ENCODE measurements at regions of chr3 and their contacts with region 1.

Region 1: GRCh38 chr3:183895296-183895695 is 10.6 kb upstream of the PARL start:
- DNase-seq: peak in 7 of 9 experiments; percentile 24 to 72 (median 39)
- ATAC-seq: peak; percentile 97
- H3K4me3 ChIP-seq: no peak overlapping the region
- H3K4me3 Mint-ChIP-seq: no peak overlapping the region
- H3K27ac ChIP-seq: no peak overlapping the region
- H3K27ac Mint-ChIP-seq: no peak overlapping the region
- H3K4me1 ChIP-seq: no peaks in the 10 kb centered on the region
- H3K4me1 Mint-ChIP-seq: no peaks in the 10 kb centered on the region
- H3K27me3 ChIP-seq: no peaks in the 10 kb centered on the region
- H3K27me3 Mint-ChIP-seq: peaks cover 29% of the 10 kb centered on the region
- CTCF ChIP-seq: peak; percentile 70

Region 2: DNA sequence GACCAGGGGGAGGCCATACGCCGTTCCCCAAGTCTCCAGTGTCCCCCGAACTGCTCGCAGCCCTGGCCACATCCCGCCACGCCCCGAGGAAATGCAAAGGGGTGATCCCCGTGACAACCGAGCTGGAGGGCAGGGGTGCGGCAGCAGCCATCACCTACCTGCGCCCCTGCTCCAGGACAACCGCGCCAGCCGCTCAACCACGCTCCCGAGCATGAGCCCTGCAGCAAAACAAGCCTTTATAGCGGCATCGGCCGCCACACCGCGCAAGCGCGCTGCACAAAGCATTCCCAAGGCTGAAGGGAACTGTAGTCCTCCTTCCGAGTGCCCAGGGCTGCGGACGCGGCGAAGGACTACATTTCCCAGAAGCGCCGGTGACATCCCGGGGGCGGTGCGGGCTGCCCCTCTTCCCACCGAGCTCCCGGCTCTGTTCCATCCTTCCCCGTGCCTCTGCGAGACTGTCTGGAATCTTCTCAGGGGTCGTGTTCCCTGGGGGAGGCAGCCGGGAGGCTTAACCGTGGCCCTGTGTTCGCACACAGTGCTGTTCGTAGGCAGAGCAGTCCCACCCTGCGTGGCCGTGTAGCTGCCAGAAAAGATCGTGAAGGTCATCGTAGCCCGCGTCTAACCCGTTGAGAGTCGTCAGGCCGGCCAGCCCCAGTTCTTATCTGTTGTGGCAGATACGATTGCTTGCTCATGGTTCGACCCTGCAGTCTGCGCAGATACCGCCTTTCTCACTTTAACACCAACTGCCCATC is 122.6 kb after region 1 on chr3 and contains the start of gene ABCC5:
- CTCF ChIA-PET with region 1: interaction called, 9 read pairs
- POLR2A ChIA-PET with region 1: no interaction called
- intact Hi-C with region 1: loop called (anchors 1 kb)
- DNase-seq: peak; percentile 60 to 91 (median 80)
- ATAC-seq: peak; percentile 94
- H3K4me3 ChIP-seq: peak within 1 kb of the TSS; percentile 94 to 98
- H3K4me3 Mint-ChIP-seq: peak within 1 kb of the TSS; percentile 99
- H3K27ac ChIP-seq: peak within 1 kb of the TSS; percentile 51 to 56
- H3K27ac Mint-ChIP-seq: peak within 1 kb of the TSS; percentile 83
- H3K4me1 ChIP-seq: peaks cover 11% of the 10 kb centered on the region
- H3K4me1 Mint-ChIP-seq: peaks cover 32% of the 10 kb centered on the region
- H3K27me3 ChIP-seq: no peaks in the 10 kb centered on the region
- H3K27me3 Mint-ChIP-seq: peaks cover 12% of the 10 kb centered on the region
- CTCF ChIP-seq: peak; percentile 76
- total RNA-seq, gene ABCC5: 7.4 to 8.3 TPM

Region 3: DNA sequence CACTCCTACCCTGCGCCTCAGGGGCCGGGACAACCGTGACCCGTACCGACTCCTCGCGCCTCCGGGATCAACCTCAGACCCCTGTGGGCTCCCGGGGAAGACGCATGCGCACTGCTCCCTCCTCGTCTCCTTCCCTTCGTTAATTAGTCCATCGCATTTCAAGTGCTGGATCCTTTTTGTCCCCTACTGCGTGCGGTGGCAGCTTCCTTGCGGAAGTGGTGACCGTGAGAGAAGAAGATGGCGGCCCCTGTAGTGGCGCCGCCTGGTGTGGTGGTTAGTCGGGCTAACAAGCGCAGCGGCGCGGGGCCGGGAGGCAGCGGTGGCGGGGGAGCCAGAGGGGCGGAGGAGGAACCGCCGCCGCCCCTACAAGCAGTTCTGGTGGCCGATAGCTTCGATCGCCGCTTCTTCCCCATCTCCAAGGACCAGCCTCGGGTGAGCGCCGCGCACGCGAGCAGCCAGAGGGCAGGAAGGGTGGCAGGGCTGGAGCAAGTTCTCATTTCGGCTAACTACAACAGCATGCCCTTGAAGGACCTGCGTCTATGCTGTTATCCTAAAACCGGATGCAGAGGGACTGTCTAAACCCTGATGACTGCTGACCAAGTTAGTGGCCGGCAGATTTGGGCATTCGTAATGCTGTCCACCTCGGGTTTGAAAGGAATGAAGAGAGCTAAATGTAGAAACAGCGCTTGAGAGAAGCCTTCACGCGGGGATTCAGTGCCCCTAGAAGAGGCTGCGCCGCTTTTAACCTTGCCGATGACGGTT is 240.0 kb after region 1 on chr3 and contains the start of gene EIF2B5:
- CTCF ChIA-PET with region 1: interaction called, 3 read pairs
- POLR2A ChIA-PET with region 1: interaction called, 4 read pairs
- intact Hi-C with region 1: loop called in 1 of 2 experiments (anchors 5 kb)
- DNase-seq: peak; percentile 67 to 95 (median 87)
- ATAC-seq: peak; percentile 89
- H3K4me3 ChIP-seq: peak within 1 kb of the TSS; percentile 79 to 91
- H3K4me3 Mint-ChIP-seq: peak within 1 kb of the TSS; percentile 100
- H3K27ac ChIP-seq: peak within 1 kb of the TSS; percentile 76 to 83
- H3K27ac Mint-ChIP-seq: peak within 1 kb of the TSS; percentile 98
- H3K4me1 ChIP-seq: peaks cover 25% of the 10 kb centered on the region
- H3K4me1 Mint-ChIP-seq: peaks cover 41% of the 10 kb centered on the region
- H3K27me3 ChIP-seq: no peaks in the 10 kb centered on the region
- H3K27me3 Mint-ChIP-seq: no peaks in the 10 kb centered on the region
- CTCF ChIP-seq: no peak
- total RNA-seq, gene EIF2B5: 52.6 to 61.9 TPM

Region 4: DNA sequence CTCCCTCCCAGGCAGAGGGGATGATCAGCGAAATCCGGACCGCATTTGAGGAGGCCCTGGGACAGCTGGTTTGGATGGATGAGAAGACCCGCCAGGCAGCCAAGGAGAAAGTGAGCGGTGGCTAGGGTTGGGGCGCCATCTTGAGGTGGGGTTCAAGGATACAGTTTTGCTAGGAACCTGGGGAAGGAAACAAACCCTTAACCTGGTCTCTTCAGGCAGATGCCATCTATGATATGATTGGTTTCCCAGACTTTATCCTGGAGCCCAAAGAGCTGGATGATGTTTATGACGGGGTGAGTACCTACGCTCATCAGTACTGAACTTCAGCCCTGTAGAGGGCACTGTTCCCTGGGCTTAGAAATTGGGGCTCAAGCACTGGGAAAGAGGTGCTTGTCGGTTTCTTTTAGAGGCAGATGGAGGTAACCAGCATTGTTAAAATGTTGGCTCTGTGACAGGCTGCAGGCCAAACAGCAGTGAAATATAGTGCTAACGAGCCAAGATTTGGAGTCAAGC is 394.2 kb after region 1 on chr3:
- CTCF ChIA-PET with region 1: interaction called, 9 read pairs
- POLR2A ChIA-PET with region 1: no interaction called
- intact Hi-C with region 1: loop called (anchors 1 kb)
- DNase-seq: peak; percentile 21 to 73 (median 57)
- ATAC-seq: peak; percentile 67
- H3K4me3 ChIP-seq: no peak overlapping the region
- H3K4me3 Mint-ChIP-seq: no peak overlapping the region
- H3K27ac ChIP-seq: no peak overlapping the region
- H3K27ac Mint-ChIP-seq: no peak overlapping the region
- H3K4me1 ChIP-seq: no peaks in the 10 kb centered on the region
- H3K4me1 Mint-ChIP-seq: no peaks in the 10 kb centered on the region
- H3K27me3 ChIP-seq: no peaks in the 10 kb centered on the region
- H3K27me3 Mint-ChIP-seq: peaks cover 13% of the 10 kb centered on the region
- CTCF ChIP-seq: peak; percentile 40